Ovary (tissue), 10 donors: ENCODE measurements at regions of chr5 and their contacts with region 1.

Region 1: GRCh38 chr5:85017261-85017660 is 632.6 kb upstream of the EDIL3 start:
- DNase-seq: no peak
- H3K4me3 ChIP-seq: no peak overlapping the region
- H3K27ac ChIP-seq: no peak overlapping the region
- H3K4me1 ChIP-seq: no peaks in the 10 kb centered on the region
- H3K27me3 ChIP-seq: no peaks in the 10 kb centered on the region
- CTCF ChIP-seq: no peak
- EP300 ChIP-seq: no peak
- POLR2A ChIP-seq: no peak

Region 2: DNA sequence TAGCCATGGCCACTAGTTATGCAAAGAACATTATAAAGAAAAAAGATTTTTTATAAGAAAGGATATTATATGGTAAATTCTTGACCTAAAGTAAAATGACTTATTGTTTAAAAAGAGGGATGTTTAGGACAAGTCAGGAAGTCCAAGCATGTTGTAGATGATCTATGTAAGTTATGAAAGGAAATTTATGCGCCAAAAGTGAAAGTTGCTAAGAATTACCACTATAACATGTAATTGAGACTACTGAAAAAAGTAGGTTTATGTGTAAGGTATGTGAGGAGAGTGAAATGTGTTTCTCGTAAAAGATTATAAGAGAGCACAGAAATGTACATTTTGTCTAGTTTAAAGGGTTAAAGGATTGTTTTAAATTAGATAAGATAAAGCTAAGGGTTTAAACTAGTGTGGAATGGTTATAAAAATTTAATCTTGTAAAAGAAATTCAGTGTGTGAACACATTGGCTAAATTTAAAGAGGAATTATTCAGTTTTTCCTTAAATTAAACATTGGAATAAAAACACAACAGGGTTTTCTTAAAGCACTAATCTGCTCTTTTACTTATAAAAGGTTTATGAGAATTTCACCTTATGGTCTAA is 467.8 kb after region 1 on chr5:
- intact Hi-C with region 1: loop called in 1 of 4 experiments (anchors 10 kb)
- DNase-seq: no peak
- H3K4me3 ChIP-seq: no peak overlapping the region
- H3K27ac ChIP-seq: no peak overlapping the region
- H3K4me1 ChIP-seq: no peaks in the 10 kb centered on the region
- H3K27me3 ChIP-seq: no peaks in the 10 kb centered on the region
- CTCF ChIP-seq: no peak
- EP300 ChIP-seq: no peak
- POLR2A ChIP-seq: no peak